ENCODE measurements at regions of chr20 and their contacts with region 1.

Region 1: DNA sequence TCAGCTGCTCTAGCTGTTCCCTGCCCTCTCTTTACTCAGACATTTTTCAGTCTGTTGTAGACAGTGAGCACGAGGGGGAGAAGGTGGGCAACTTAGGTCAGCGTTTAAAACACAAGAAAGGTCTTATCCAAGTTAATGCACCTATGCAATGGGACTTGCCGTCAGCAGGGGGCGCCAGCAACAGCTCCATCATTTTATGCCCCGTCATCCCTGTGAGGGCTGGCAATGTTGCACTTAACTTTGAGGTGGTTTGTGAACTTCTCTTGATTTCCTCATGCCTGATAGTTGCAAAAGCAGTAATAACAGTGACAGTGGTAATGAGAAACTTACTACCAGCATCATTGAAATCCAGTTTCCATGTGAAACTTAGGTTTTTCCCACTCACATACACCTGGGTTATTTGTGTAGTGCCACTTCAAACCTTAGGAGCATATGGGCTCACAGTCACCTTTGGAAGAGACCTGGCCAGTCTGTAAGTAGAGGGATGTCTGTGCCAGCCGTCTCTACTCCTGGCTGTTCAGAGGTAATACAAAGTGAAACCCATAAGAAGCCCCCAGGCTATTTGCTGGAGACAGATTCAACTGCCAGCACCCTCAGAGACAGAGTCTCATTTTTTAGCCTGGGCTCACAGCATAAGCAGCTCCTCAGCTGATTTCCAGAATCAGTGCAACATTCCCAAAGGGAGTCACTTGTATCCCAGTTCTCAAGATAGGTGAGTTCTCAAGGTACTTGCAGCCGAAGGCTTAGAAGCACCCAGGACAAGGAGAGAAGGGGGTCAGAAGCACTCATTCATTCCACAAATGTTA is 44.8 kb upstream of the ID1 start:
- DNase-seq: peak; percentile 79
- H3K4me3 ChIP-seq: no peak overlapping the region
- H3K27ac ChIP-seq: peak overlapping the region; percentile 100
- H3K4me1 ChIP-seq: peaks cover 35% of the 10 kb centered on the region
- H3K27me3 ChIP-seq: no peaks in the 10 kb centered on the region
- CTCF ChIP-seq: peak; percentile 90 to 97
- POLR2A ChIP-seq: peak; percentile 41

Region 2: GRCh38 chr20:31514159-31515071 is 45.9 kb before region 1 on chr20 and contains the start of gene HM13:
- CTCF ChIA-PET with region 1: interaction called, 9 read pairs
- POLR2A ChIA-PET with region 1: no interaction called
- dilution Hi-C with region 1: no loop called
- intact Hi-C with region 1: loop called (anchors 2 kb)
- DNase-seq: peak; percentile 94
- H3K4me3 ChIP-seq: peak within 1 kb of the TSS; percentile 7 to 84 (median 70)
- H3K27ac ChIP-seq: peak within 1 kb of the TSS; percentile 38
- H3K4me1 ChIP-seq: peaks cover 25% of the 10 kb centered on the region
- H3K27me3 ChIP-seq: no peaks in the 10 kb centered on the region
- CTCF ChIP-seq: peak; percentile 94 to 99
- POLR2A ChIP-seq: peak; percentile 95
- total RNA-seq, gene HM13: 188 and 211 TPM in 2 replicates

Region 3: DNA sequence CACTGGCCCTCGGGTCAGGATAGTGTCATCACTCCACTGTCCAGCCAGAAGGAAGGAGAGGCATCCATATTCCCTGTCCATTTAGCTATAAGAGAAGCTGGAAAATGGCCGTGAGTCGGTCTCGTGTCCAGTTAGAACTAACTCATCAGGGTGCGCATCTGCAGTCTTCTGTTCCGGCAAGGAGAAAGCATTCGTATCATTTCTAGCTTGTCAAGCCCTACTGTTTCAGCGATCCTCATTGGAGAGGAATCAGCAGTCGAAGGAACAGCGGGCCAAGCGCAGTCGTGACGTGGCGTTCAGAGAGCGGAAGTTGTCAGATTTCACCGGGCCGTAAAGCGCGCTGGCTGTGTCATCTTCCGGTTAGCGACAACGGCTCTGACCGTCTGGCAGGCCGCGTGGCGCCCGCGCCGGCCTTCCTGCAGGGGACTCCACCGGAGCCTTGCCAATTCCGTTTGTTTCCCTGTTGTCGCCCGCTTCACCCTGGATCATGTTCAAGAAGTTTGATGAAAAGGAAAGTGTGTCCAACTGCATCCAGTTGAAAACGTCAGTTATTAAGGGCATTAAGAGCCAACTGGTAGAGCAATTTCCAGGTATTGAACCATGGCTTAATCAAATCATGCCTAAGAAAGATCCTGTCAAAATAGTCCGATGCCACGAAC is 13.2 kb before region 1 on chr20:
- CTCF ChIA-PET with region 1: interaction called, 21 read pairs
- POLR2A ChIA-PET with region 1: no interaction called
- dilution Hi-C with region 1: no loop called
- intact Hi-C with region 1: no loop called
- DNase-seq: peak; percentile 95
- H3K4me3 ChIP-seq: peak overlapping the region; percentile 39 to 92 (median 45)
- H3K27ac ChIP-seq: peak overlapping the region; percentile 93
- H3K4me1 ChIP-seq: peaks cover 16% of the 10 kb centered on the region
- H3K27me3 ChIP-seq: no peaks in the 10 kb centered on the region
- CTCF ChIP-seq: no peak
- POLR2A ChIP-seq: peak; percentile 78

Region 4: DNA sequence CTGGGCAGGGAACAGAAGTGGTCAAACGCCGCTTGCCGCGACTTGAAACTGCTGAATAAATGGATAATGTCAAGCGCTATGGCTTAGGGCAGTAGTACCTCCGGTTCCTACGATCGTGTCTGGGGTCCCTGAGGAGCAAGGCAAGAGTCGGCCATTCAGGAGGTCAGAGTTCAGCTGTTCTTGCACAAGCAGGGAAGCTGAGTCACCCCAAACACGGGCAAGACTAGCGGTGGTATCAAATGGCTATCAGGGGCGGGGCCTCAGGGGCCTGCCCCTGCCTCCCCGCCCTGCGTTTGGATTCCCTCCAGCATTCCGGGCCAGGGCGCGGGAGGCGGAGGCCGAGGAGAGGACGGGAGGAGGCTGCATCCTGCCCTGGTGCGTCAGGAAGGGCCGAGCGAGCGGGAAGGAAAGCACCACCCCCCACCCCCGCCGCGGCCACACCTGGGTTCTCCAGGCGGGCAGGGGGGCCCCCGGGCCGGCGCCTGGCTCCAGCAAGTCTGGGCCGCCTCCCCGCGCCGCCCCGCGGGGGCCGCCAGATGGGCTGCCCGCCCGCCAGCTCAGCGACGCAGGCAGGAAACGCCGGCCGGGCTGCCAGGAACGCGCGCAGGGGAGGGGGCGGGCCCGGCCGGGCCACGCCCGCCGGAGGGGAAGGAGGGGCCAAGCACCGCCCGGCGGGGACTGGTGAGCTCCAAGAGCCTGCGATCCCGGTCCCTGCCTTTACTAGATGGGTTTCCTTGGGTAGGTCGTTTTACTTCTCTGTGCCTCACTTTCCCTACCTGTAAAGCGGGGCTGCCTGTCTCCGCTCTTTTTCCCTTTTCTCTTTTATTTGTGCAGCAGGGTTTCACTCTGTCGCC is 12.6 kb after region 1 on chr20:
- CTCF ChIA-PET with region 1: interaction called, 55 read pairs
- POLR2A ChIA-PET with region 1: interaction called, 4 read pairs
- dilution Hi-C with region 1: no loop called
- intact Hi-C with region 1: loop called (anchors 1 kb)
- DNase-seq: peak; percentile 99
- H3K4me3 ChIP-seq: peak overlapping the region; percentile 22 to 52 (median 31)
- H3K27ac ChIP-seq: peak overlapping the region; percentile 94
- H3K4me1 ChIP-seq: peaks cover 36% of the 10 kb centered on the region
- H3K27me3 ChIP-seq: no peaks in the 10 kb centered on the region
- CTCF ChIP-seq: no peak
- POLR2A ChIP-seq: peak; percentile 92

Region 5: DNA sequence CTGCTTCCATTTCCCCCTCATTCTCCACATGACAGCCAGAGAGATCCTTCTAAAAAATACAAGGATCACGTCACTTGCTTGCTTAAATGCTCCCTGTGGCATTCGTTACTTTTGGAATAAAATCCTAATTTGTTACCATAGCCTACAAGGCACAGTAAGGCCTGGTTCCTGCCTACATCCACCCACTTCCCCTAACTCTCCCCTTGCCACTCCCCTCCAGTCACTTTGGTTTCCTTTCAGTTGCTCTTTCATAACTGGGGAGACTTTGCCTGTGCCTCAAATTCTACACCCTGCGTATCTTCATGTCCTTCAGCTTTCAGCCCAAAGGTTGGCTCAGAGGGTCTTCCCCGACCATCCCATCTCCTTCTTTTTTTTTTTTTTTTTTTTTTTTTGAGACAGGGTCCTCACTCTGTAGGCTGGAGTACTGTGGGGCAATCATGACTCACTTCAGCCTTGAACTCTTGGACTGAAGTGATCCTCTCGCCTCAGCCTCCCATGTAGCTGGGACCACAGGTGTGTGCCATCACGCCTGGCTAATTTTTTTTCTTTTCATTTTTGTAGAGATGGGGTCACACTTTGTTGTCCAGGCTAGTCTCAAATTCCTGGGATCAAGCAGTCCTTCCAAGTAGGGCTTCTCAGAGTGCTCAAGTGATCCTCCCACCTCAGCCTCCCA is 57.3 kb after region 1 on chr20:
- CTCF ChIA-PET with region 1: interaction called, 1,817 read pairs
- POLR2A ChIA-PET with region 1: interaction called, 14 read pairs
- dilution Hi-C with region 1: no loop called
- intact Hi-C with region 1: loop called (anchors 1 kb)
- DNase-seq: no peak
- H3K4me3 ChIP-seq: no peak overlapping the region
- H3K27ac ChIP-seq: no peak overlapping the region
- H3K4me1 ChIP-seq: peaks cover 4% of the 10 kb centered on the region
- H3K27me3 ChIP-seq: no peaks in the 10 kb centered on the region
- CTCF ChIP-seq: no peak
- POLR2A ChIP-seq: no peak

Region 6: GRCh38 chr20:32168184-32168905 is 608.0 kb after region 1 on chr20:
- CTCF ChIA-PET with region 1: no interaction called
- POLR2A ChIA-PET with region 1: no interaction called
- dilution Hi-C with region 1: no loop called
- intact Hi-C with region 1: no loop called
- DNase-seq: peak; percentile 30
- H3K4me3 ChIP-seq: no peak overlapping the region
- H3K27ac ChIP-seq: no peak overlapping the region
- H3K4me1 ChIP-seq: no peaks in the 10 kb centered on the region
- H3K27me3 ChIP-seq: no peaks in the 10 kb centered on the region
- CTCF ChIP-seq: no peak
- POLR2A ChIP-seq: no peak